ENCODE measurements at regions of chr1 and their contacts with region 1.

Region 1: DNA sequence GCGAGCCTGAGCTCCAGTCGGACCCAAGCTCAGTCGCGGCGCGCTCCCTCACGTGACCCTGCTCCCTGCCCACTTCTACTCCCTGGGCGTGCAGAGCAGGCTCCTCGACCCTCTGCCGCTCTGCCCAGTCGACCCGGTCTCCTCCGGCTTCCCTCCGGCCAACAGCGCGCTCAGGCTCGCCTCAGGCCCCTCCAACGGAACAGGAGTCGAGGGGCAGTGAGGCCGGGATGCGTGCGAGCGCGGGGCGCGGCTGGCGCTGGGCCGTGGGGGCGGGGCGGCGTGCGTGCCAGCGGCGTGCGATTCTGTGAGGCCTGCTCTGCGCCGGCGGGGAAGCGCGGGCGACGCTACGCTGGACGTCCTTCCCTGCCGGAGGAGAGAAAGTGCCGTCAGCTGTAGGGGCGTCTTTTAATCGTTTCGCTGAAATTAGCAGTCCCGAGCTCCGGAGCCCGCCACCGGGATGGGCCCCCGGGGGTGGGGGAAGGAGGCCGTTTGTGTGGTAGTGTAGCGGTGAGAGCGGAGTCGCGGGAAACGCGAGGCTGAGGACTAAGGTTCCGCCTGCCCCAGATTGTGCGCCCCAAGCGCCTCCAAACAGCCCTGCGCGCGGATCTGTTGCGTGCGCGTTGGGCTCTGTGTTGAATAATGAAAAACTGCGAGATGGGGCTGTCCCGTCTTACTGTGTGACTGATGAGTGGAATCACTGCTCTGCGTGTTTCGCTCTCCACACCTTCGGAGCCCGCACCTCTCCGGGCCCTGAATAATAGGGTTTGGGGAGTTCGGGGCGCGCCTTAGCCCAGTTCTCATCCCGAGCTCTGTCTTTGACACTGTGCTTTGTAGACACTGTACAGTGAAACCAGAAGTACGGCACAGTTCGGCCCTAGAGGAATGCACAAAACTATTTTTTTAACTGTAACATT is at the start of gene ACBD6:
- DNase-seq: peak; percentile 89
- H3K4me3 ChIP-seq: peak within 1 kb of the TSS; percentile 62 to 91 (median 67)
- H3K27ac ChIP-seq: peak within 1 kb of the TSS; percentile 82
- H3K4me1 ChIP-seq: peaks cover 11% of the 10 kb centered on the region
- H3K27me3 ChIP-seq: no peaks in the 10 kb centered on the region
- CTCF ChIP-seq: peak in 1 of 2 donors; percentile 28
- total RNA-seq, gene ACBD6: 50.7 to 77.8 TPM

Region 2: DNA sequence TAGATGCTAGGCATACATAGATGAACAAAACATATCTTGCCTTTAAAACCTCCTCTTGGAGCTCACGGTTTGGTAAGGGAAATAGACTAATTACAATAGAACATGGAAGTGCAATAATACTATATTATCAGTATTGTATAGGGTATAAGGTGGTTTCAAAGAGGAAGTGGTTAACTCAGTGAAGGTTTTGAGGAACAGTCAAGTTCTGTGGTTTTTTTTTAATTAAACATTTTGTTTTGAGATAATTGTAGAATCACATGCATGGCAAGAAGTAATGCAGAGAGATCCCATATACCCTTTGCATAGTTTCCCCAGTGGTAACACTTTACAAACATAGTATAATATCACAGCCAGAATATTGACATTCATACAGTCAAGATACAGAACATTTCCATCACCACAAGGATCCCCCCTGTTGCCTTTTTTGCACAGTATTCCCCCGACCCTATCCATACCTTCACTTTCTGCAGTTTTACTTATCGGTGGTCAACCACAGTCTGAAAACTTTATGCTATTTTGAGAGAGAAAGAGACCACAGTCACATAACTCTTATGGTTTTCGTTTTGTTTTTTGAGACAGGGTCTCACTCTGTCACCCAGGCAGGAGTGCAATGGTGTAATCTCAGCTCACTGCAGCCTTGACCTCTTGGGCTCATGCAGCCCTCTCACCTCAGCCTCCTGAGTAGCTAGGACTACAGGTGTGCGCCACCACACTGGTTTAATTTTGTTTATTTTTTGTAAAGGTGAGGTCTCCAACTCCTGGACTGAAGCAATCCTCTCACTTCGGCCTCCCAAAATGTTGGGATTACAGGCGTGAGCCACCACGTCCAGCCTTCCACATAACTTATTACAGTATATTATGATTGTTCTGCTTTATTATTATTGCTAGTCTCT is 349.6 kb after region 1 on chr1:
- CTCF ChIA-PET with region 1: no interaction called
- dilution Hi-C with region 1: loop called (anchors 5 kb)
- in situ Hi-C with region 1: no loop called
- intact Hi-C with region 1: no loop called
- DNase-seq: no peak
- H3K4me3 ChIP-seq: no peak overlapping the region
- H3K27ac ChIP-seq: no peak overlapping the region
- H3K4me1 ChIP-seq: peaks cover 12% of the 10 kb centered on the region
- H3K27me3 ChIP-seq: no peaks in the 10 kb centered on the region
- CTCF ChIP-seq: no peak

Region 3: DNA sequence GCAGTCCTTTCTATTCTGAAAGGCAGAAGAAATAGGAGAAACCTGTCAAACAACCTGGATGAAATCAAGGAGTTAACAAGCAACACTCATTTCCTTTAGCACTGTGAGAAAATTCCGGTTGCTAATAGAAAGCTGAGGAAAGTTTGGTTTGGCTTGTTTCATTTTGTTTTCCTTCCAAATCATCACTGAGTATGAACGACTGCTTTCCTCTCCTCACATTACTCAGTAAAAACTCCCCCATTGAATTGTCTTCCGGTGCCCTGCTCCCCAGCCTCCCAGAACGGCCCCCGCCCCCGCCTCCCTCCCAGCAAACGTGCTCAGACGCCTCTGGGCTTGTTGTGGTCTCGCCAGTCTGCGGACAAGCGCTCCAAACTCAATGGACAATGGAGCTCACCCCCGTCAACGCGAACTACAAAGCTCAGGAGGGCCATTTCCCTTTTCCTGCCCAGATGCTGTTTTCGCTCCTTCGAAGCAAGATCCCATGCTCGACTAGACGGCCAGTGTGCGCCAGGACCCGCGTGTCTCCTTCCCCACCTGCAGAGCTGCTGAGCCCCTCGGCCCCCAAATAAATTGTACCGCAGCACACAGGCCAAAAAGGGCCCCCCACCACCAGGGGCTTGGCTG is 519.3 kb after region 1 on chr1:
- CTCF ChIA-PET with region 1: no interaction called
- dilution Hi-C with region 1: no loop called
- in situ Hi-C with region 1: loop called in 1 of 2 experiments (anchors 25 kb)
- intact Hi-C with region 1: no loop called
- DNase-seq: peak; percentile 92
- H3K4me3 ChIP-seq: peak overlapping the region; percentile 78 to 93 (median 92)
- H3K27ac ChIP-seq: peak overlapping the region; percentile 78
- H3K4me1 ChIP-seq: peaks cover 23% of the 10 kb centered on the region
- H3K27me3 ChIP-seq: no peaks in the 10 kb centered on the region
- CTCF ChIP-seq: no peak